Naive thymus-derived CD4-positive, alpha-beta T cell (primary cell): ENCODE measurements at regions of chrX and their contacts with region 1.

Region 1: DNA sequence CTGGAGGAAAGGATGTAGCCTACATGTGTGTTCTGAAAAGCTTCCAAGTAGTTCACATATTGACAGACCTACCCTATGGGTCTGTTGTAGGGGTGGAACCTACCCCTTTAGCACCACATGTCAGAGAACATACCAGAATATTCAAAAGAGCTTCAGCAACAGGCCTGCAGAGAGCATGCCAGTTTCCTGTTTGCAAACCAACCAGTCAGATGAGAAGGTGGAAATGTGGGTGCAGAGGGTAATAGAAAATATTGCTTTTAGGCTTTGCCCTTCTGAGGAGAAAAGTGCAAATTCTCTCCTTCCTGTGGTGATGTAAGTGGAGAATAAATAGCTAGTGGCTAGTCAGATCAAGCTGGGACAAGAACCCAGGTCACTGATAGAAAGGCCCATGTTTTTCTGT is 16.4 kb downstream of the INTS6L start:
- DNase-seq: peak in 5 of 9 donors; percentile 16 to 35 (median 27)
- ATAC-seq: peak; percentile 65
- H3K4me3 ChIP-seq: no peak overlapping the region
- H3K4me3 Mint-ChIP-seq: peak overlapping the region in 9 of 10 donors; percentile 33 to 65 (median 60)
- H3K27ac ChIP-seq: peak overlapping the region; percentile 57
- H3K27ac Mint-ChIP-seq: peak overlapping the region; percentile 17 to 83 (median 69)
- H3K4me1 ChIP-seq: peaks cover 2 to 28% of the 10 kb centered on the region in 2 donors
- H3K4me1 Mint-ChIP-seq: peaks cover 21 to 85% (median 73%) of the 10 kb centered on the region in 7 donors
- H3K27me3 ChIP-seq: no peaks in the 10 kb centered on the region
- H3K27me3 Mint-ChIP-seq: no peaks in the 10 kb centered on the region

Region 2: GRCh38 chrX:134186362-134187121 is 1350.3 kb before region 1 on chrX:
- CTCF ChIA-PET with region 1: no interaction called
- POLR2A ChIA-PET with region 1: no interaction called
- intact Hi-C with region 1: no loop called
- DNase-seq: peak in 8 of 9 donors; percentile 60 to 88 (median 76)
- ATAC-seq: peak; percentile 94
- H3K4me3 ChIP-seq: peak overlapping the region; percentile 24
- H3K4me3 Mint-ChIP-seq: peak overlapping the region; percentile 21 to 98 (median 74)
- H3K27ac ChIP-seq: no peak overlapping the region
- H3K27ac Mint-ChIP-seq: peak overlapping the region in 5 of 9 donors; percentile 4 to 96 (median 44)
- H3K4me1 ChIP-seq: peaks cover 10 to 19% of the 10 kb centered on the region in 2 donors
- H3K4me1 Mint-ChIP-seq: peaks cover 0 to 50% (median 37%) of the 10 kb centered on the region in 7 donors
- H3K27me3 ChIP-seq: no peaks in the 10 kb centered on the region
- H3K27me3 Mint-ChIP-seq: no peaks in the 10 kb centered on the region

Region 3: DNA sequence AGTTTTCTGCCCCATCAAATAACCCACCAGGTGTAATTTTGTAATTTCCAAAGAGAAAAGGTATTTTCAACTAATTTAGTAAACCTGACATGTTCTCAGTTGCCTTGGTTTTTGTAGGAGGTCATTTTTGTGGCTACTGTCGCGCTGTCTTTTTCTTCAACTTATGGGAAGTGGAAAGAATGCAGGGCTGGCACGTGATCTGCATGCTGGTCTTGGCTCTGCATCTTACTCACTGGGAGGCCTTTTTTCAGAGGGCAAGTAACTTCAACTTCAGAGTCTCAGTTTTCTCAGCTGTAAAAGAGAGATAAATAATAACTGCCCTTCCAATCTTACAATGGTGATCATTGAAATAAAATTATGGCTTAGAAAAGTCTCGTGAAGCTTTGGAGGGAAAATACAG is 656.0 kb before region 1 on chrX:
- CTCF ChIA-PET with region 1: no interaction called
- POLR2A ChIA-PET with region 1: no interaction called
- intact Hi-C with region 1: no loop called
- DNase-seq: no peak
- ATAC-seq: no peak
- H3K4me3 ChIP-seq: no peak overlapping the region
- H3K4me3 Mint-ChIP-seq: no peak overlapping the region
- H3K27ac ChIP-seq: no peak overlapping the region
- H3K27ac Mint-ChIP-seq: no peak overlapping the region
- H3K4me1 ChIP-seq: no peaks in the 10 kb centered on the region
- H3K4me1 Mint-ChIP-seq: peaks cover 0 to 4% (median 0%) of the 10 kb centered on the region in 7 donors
- H3K27me3 ChIP-seq: no peaks in the 10 kb centered on the region
- H3K27me3 Mint-ChIP-seq: no peaks in the 10 kb centered on the region

Region 4: GRCh38 chrX:134925551-134925950 is 611.3 kb before region 1 on chrX:
- CTCF ChIA-PET with region 1: no interaction called
- POLR2A ChIA-PET with region 1: no interaction called
- intact Hi-C with region 1: no loop called
- DNase-seq: no peak
- ATAC-seq: no peak
- H3K4me3 ChIP-seq: no peak overlapping the region
- H3K4me3 Mint-ChIP-seq: no peak overlapping the region
- H3K27ac ChIP-seq: no peak overlapping the region
- H3K27ac Mint-ChIP-seq: no peak overlapping the region
- H3K4me1 ChIP-seq: no peaks in the 10 kb centered on the region
- H3K4me1 Mint-ChIP-seq: no peaks in the 10 kb centered on the region
- H3K27me3 ChIP-seq: no peaks in the 10 kb centered on the region
- H3K27me3 Mint-ChIP-seq: peaks cover 0 to 6% (median 0%) of the 10 kb centered on the region in 5 donors

Region 5: DNA sequence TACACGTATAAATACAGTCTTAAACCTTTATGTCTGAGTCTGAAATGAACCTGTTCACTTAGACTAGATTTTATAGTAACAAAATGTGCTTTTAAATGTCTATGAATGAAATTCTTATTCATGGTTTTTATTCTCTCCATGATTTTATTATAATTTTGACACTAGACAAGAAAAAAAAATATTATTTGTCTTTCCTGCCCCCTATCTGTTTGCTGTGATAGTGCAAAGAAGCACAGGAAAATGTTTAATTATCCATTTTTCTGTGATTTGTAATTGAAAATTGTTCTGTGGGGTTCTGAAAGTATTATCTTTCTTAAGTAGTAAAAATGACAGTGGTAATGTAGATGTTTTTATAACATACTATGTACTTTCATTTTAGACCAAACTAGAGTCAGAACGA is 35.6 kb after region 1 on chrX:
- CTCF ChIA-PET with region 1: no interaction called
- POLR2A ChIA-PET with region 1: no interaction called
- intact Hi-C with region 1: loop called in 1 of 2 experiments (anchors 5 kb)
- DNase-seq: peak in 4 of 9 donors; percentile 5 to 12 (median 10)
- ATAC-seq: no peak
- H3K4me3 ChIP-seq: no peak overlapping the region
- H3K4me3 Mint-ChIP-seq: no peak overlapping the region
- H3K27ac ChIP-seq: no peak overlapping the region
- H3K27ac Mint-ChIP-seq: no peak overlapping the region
- H3K4me1 ChIP-seq: no peaks in the 10 kb centered on the region
- H3K4me1 Mint-ChIP-seq: peaks cover 0 to 4% (median 0%) of the 10 kb centered on the region in 7 donors
- H3K27me3 ChIP-seq: no peaks in the 10 kb centered on the region
- H3K27me3 Mint-ChIP-seq: no peaks in the 10 kb centered on the region